ENCODE measurements at regions of chr19 and their contacts with region 1.

Region 1: DNA sequence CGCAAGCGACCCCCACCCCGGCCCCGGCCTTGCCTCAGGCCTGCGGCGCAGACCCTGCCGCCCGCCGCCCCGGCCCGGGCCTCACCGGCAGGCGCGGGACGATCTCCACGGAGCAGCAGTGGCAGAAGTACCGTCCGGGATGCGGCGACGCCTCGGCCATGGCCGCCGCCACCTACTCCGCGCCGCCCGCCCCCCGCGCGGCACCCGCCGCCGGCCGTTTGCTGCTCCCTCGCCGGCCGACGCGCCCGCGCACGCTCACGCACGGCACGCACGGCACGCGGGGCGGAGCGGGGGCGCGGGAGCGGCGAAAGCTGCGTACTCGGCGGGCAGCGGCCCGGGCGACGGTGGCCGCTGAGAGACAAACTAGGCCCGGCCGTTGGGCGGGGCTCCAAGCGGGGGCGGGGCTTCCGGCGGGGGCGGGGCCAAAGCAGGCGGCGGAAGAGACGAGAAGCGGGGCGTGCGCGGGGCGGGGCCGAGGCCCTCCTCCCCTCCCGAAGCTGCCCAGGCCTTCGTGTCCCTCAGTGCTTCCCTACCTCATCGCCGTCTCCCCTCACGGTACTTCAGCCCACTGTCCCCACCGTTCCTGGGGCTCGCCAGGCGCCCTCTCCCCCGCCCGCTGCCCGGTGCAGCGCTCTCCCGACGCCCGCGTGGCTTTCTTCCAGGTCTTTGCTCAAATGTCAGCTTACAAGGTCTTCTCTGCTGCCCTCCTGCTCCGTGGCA is at the start of gene RNF126:
- DNase-seq: peak; percentile 73
- ATAC-seq: peak; percentile 24
- H3K4me3 ChIP-seq: peak within 1 kb of the TSS; percentile 76 to 99 (median 96)
- H3K27ac ChIP-seq: peak within 1 kb of the TSS; percentile 96
- H3K4me1 ChIP-seq: peaks cover 53% of the 10 kb centered on the region
- H3K27me3 ChIP-seq: no peaks in the 10 kb centered on the region; a peak in 1 of 5 replicates
- CTCF ChIP-seq: peak; percentile 30; the same call in 1 of the 2 replicates
- EP300 ChIP-seq: no peak; a peak in 1 of 4 replicates
- POLR2A ChIP-seq: peak; percentile 72 to 78
- RAD21 ChIP-seq: no peak
- total RNA-seq, gene RNF126: 18.5 and 34.0 TPM in 2 replicates

Region 2: GRCh38 chr19:556611-557382 is 106.3 kb before region 1 on chr19:
- CTCF ChIA-PET with region 1: no interaction called
- POLR2A ChIA-PET with region 1: interaction called, 14 read pairs
- in situ Hi-C with region 1: no loop called
- intact Hi-C with region 1: no loop called
- DNase-seq: peak; percentile 27
- ATAC-seq: peak; percentile 33
- H3K4me3 ChIP-seq: peak overlapping the region; percentile 36 to 73 (median 43)
- H3K27ac ChIP-seq: peak overlapping the region; percentile 81
- H3K4me1 ChIP-seq: peaks cover 55% of the 10 kb centered on the region
- H3K27me3 ChIP-seq: no peaks in the 10 kb centered on the region; a peak in 1 of 5 replicates
- CTCF ChIP-seq: no peak
- EP300 ChIP-seq: no peak
- POLR2A ChIP-seq: peak in 1 of 2 experiments; percentile 46; a peak in 1 of 4 replicates
- RAD21 ChIP-seq: no peak

Region 3: GRCh38 chr19:633068-633785 is 29.9 kb before region 1 on chr19 and contains the start of gene POLRMT:
- CTCF ChIA-PET with region 1: no interaction called
- POLR2A ChIA-PET with region 1: interaction called, 21 read pairs
- in situ Hi-C with region 1: no loop called
- intact Hi-C with region 1: no loop called
- DNase-seq: peak; percentile 96
- ATAC-seq: peak; percentile 83
- H3K4me3 ChIP-seq: peak within 1 kb of the TSS; percentile 91 to 98 (median 98)
- H3K27ac ChIP-seq: peak within 1 kb of the TSS; percentile 97
- H3K4me1 ChIP-seq: peaks cover 36% of the 10 kb centered on the region
- H3K27me3 ChIP-seq: no peaks in the 10 kb centered on the region; a peak in 1 of 5 replicates
- CTCF ChIP-seq: no peak
- EP300 ChIP-seq: no peak
- POLR2A ChIP-seq: peak; percentile 59 to 67; a peak in 3 of 4 replicates
- RAD21 ChIP-seq: no peak; the same call in 1 of the 2 replicates
- total RNA-seq, gene POLRMT: 52.5 and 78.0 TPM in 2 replicates

Region 4: DNA sequence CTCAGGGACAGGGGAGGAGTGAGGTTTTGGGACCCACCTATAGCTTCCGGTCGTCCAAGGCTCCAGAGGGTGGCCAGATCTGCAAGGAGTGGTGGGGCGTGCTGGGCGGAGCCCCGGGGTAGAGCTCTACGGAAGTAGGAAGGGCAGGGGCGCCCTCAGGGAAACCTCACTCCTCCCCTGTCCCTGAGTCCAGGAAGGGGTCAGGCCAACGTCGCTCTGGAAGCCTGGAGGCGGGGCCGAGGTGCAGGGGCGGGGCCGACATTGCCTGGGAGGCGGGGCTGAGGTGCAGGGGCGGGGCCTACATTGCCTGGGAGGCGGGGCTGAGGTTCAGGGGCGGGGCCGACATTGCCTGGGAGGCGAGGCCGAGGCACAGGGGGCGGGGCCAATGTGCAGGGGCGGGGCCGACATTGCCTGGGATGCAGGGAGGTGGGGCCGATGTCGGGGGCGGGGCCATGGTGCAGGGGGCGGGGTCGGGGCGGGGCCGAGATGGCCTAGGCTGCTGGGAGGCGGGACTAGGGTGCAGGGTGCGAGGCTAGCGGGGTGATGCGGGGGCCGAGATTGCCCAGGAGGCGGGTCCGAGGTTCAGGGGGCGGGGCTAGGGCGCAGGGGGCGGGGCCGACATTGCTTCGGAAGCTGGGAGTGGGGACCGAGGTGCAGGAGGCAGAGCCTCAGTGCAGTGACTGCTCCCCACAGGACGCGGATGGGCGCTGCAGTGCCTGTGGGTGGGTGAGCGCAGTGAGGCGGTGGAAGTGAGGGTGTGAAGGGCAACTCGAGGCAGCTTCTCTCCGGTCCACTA is 40.7 kb after region 1 on chr19:
- CTCF ChIA-PET with region 1: interaction called, 3 read pairs
- POLR2A ChIA-PET with region 1: interaction called, 11 read pairs
- in situ Hi-C with region 1: no loop called
- intact Hi-C with region 1: no loop called
- DNase-seq: peak; percentile 90
- ATAC-seq: peak; percentile 91
- H3K4me3 ChIP-seq: peak overlapping the region; percentile 72 to 83 (median 76)
- H3K27ac ChIP-seq: peak overlapping the region; percentile 69
- H3K4me1 ChIP-seq: peaks cover 45% of the 10 kb centered on the region
- H3K27me3 ChIP-seq: no peaks in the 10 kb centered on the region; a peak in 1 of 5 replicates
- CTCF ChIP-seq: peak; percentile 58
- EP300 ChIP-seq: no peak
- POLR2A ChIP-seq: peak; percentile 93 to 100
- RAD21 ChIP-seq: peak; percentile 22; the same call in 1 of the 2 replicates

Region 5: GRCh38 chr19:737581-738093 is 74.5 kb after region 1 on chr19:
- CTCF ChIA-PET with region 1: interaction called, 25 read pairs
- POLR2A ChIA-PET with region 1: interaction called, 14 read pairs
- in situ Hi-C with region 1: loop called (anchors 5 kb)
- intact Hi-C with region 1: loop called (anchors 1 kb)
- DNase-seq: peak; percentile 41
- ATAC-seq: peak; percentile 56
- H3K4me3 ChIP-seq: peak overlapping the region in 1 of 3 experiments; percentile 5; a peak in 1 of 6 replicates
- H3K27ac ChIP-seq: peak overlapping the region; percentile 88
- H3K4me1 ChIP-seq: peaks cover 48% of the 10 kb centered on the region
- H3K27me3 ChIP-seq: no peaks in the 10 kb centered on the region
- CTCF ChIP-seq: peak; percentile 90
- EP300 ChIP-seq: no peak
- POLR2A ChIP-seq: no peak
- RAD21 ChIP-seq: peak; percentile 53; the same call in 1 of the 2 replicates

Region 6: GRCh38 chr19:821825-822503 is 158.8 kb after region 1 on chr19 and contains the start of gene PLPPR3:
- CTCF ChIA-PET with region 1: no interaction called
- POLR2A ChIA-PET with region 1: no interaction called
- in situ Hi-C with region 1: no loop called
- intact Hi-C with region 1: no loop called
- DNase-seq: no peak
- ATAC-seq: no peak
- H3K4me3 ChIP-seq: peak within 1 kb of the TSS; percentile 34 to 58 (median 43); a peak in 4 of 6 replicates
- H3K27ac ChIP-seq: no peak within 1 kb of the TSS
- H3K4me1 ChIP-seq: peaks cover 8% of the 10 kb centered on the region
- H3K27me3 ChIP-seq: peaks cover 4 to 22% of the 10 kb centered on the region in 2 experiments
- CTCF ChIP-seq: no peak
- EP300 ChIP-seq: no peak
- POLR2A ChIP-seq: no peak
- RAD21 ChIP-seq: no peak
- total RNA-seq, gene PLPPR3: 0.07 TPM in 1 of 2 replicates, not detected in the other

Measured in HepG2 (cell line).